ENCODE measurements at regions of chr17 and their contacts with region 1.

Region 1: DNA sequence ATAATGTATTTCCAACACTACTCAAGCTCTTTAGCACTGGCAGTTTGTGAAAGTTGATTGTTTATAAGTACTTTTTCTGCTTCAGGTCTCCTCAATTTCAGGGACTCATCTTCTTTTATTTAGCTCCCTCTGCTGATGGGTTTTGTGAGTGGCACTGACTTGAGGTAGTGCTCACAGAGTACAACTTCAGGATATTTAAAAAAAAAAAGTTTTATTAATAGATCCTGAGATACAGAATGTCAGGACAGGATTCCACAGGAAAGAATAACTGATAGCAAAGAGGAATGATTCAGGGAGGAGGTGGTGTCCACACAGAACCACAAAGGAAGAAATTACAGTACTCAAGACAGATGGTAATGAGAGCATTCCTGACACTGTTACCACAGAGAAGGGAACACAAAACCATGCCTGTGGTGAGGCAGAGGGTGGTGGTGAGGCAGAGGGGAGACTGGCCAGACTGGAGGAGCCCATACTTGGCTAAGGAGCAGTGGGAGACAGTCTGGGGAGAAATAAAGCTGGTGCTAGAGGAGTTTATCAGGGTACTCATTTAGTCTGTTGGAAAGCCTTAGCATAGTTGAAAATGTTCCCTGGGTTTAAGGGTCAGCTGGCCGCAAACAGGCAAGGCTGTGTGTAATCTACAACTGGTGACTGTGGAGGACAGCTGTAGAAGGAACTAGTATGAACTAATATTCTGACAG is 63.7 kb downstream of the SPAG9 start:
- DNase-seq: peak; percentile 68
- ATAC-seq: peak; percentile 98
- H3K4me3 ChIP-seq: peak overlapping the region in 1 of 3 experiments; percentile 32; a peak in 1 of 6 replicates
- H3K27ac ChIP-seq: peak overlapping the region; percentile 64
- H3K4me1 ChIP-seq: peaks cover 22% of the 10 kb centered on the region
- H3K27me3 ChIP-seq: no peaks in the 10 kb centered on the region
- CTCF ChIP-seq: peak; percentile 69
- EP300 ChIP-seq: no peak
- POLR2A ChIP-seq: no peak
- RAD21 ChIP-seq: no peak

Region 2: GRCh38 chr17:51000835-51001638 is 55.9 kb before region 1 on chr17:
- CTCF ChIA-PET with region 1: interaction called, 19 read pairs
- POLR2A ChIA-PET with region 1: no interaction called
- in situ Hi-C with region 1: loop called (anchors 10 kb)
- intact Hi-C with region 1: loop called (anchors 1 kb)
- DNase-seq: peak; percentile 71
- ATAC-seq: peak; percentile 79
- H3K4me3 ChIP-seq: no peak overlapping the region
- H3K27ac ChIP-seq: no peak overlapping the region
- H3K4me1 ChIP-seq: peaks cover 11% of the 10 kb centered on the region
- H3K27me3 ChIP-seq: no peaks in the 10 kb centered on the region
- CTCF ChIP-seq: peak; percentile 67
- EP300 ChIP-seq: no peak
- POLR2A ChIP-seq: no peak
- RAD21 ChIP-seq: no peak; the same call in 1 of the 2 replicates

Region 3: DNA sequence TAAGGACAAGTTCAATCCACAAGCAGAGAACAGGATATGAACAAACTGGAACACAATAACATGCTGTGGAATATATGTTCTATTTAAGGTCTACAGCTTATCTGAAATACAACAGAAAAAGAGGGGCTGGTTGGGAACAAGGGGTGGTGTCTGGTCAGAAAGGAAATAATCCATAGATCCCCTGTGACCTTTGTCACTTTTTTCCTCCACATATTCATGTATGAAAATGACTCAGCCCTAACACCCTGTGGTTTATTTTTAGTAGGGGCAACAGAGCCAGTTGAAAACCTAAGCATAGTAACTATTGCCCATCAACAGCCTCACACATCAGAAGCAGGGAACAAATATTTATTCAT is 76.0 kb after region 1 on chr17:
- CTCF ChIA-PET with region 1: no interaction called
- POLR2A ChIA-PET with region 1: no interaction called
- in situ Hi-C with region 1: no loop called
- intact Hi-C with region 1: no loop called
- DNase-seq: no peak
- ATAC-seq: peak; percentile 48
- H3K4me3 ChIP-seq: peak overlapping the region in 1 of 3 experiments; percentile 3; a peak in 1 of 6 replicates
- H3K27ac ChIP-seq: no peak overlapping the region
- H3K4me1 ChIP-seq: peaks cover 51% of the 10 kb centered on the region
- H3K27me3 ChIP-seq: no peaks in the 10 kb centered on the region
- CTCF ChIP-seq: no peak
- EP300 ChIP-seq: no peak
- POLR2A ChIP-seq: no peak
- RAD21 ChIP-seq: no peak

Measured in HepG2 (cell line).